Activated T-helper 1 cell treated with anti-CD3 and anti-CD28 coated beads, Interleukin-12 subunit alpha, Interleukin-12 subunit beta, Interleukin-2, Interleukin-4 antibody, amounts not matched to agents 30 ng/mL and 10 ng/mL and 1 ng/mL, durations not matched to agents 14 hours and 24 hours and 36 hours (primary cell): ENCODE measurements at regions of chrX and their contacts with region 1.

Region 1: GRCh38 chrX:53594354-53594753 is 92.2 kb downstream of the HUWE1 start:
- DNase-seq: no peak
- H3K4me3 Mint-ChIP-seq: no peak overlapping the region
- H3K27ac Mint-ChIP-seq: no peak overlapping the region
- H3K4me1 Mint-ChIP-seq: no peaks in the 10 kb centered on the region
- H3K27me3 Mint-ChIP-seq: no peaks in the 10 kb centered on the region

Region 2: DNA sequence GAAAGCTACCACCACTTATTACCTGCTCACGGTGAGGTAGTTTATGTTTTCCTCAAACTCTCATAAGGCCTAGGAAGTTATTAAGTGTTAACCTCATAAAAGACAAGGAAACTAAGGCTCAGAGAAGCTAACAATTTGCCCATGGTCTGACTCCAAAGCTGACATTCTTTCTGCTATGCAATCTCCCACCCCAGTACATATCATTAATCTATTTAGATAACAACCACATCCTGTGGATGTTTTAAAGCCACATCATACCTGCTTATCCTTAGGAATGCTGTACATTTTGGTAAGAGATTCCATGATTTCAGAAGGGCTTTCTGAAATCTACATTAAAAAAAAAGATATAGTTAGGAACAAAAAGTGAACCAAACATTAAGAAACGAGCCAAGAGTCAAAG is 36.8 kb after region 1 on chrX:
- intact Hi-C with region 1: loop called (anchors 5 kb)
- DNase-seq: no peak
- H3K4me3 Mint-ChIP-seq: no peak overlapping the region
- H3K27ac Mint-ChIP-seq: no peak overlapping the region
- H3K4me1 Mint-ChIP-seq: no peaks in the 10 kb centered on the region
- H3K27me3 Mint-ChIP-seq: no peaks in the 10 kb centered on the region